Activated CD4-positive, alpha-beta memory T cell treated with anti-CD3 and anti-CD28 coated beads for 36 hours (primary cell): ENCODE measurements at regions of chr1 and their contacts with region 1.

Region 1: GRCh38 chr1:241847796-241848685 is at the start of gene EXO1:
- DNase-seq: peak; percentile 93
- H3K4me3 Mint-ChIP-seq: peak within 1 kb of the TSS; percentile 91
- H3K27ac Mint-ChIP-seq: peak within 1 kb of the TSS; percentile 99
- H3K4me1 Mint-ChIP-seq: peaks cover 22% of the 10 kb centered on the region
- H3K27me3 Mint-ChIP-seq: no peaks in the 10 kb centered on the region
- total RNA-seq, gene EXO1: 44.3 to 50.0 TPM

Region 2: GRCh38 chr1:241592273-241592958 is 255.6 kb before region 1 on chr1:
- CTCF ChIA-PET with region 1: no interaction called
- POLR2A ChIA-PET with region 1: no interaction called
- intact Hi-C with region 1: loop called (anchors 5 kb)
- DNase-seq: no peak
- H3K4me3 Mint-ChIP-seq: no peak overlapping the region
- H3K27ac Mint-ChIP-seq: peak overlapping the region; percentile 49
- H3K4me1 Mint-ChIP-seq: peaks cover 27% of the 10 kb centered on the region
- H3K27me3 Mint-ChIP-seq: no peaks in the 10 kb centered on the region

Region 3: GRCh38 chr1:241677201-241677600 is 170.8 kb before region 1 on chr1:
- CTCF ChIA-PET with region 1: no interaction called
- POLR2A ChIA-PET with region 1: no interaction called
- intact Hi-C with region 1: loop called (anchors 1 kb)
- DNase-seq: no peak
- H3K4me3 Mint-ChIP-seq: no peak overlapping the region
- H3K27ac Mint-ChIP-seq: no peak overlapping the region
- H3K4me1 Mint-ChIP-seq: peaks cover 15% of the 10 kb centered on the region
- H3K27me3 Mint-ChIP-seq: peaks cover 2% of the 10 kb centered on the region

Region 4: GRCh38 chr1:241716915-241717656 is 131.0 kb before region 1 on chr1:
- CTCF ChIA-PET with region 1: no interaction called
- POLR2A ChIA-PET with region 1: no interaction called
- intact Hi-C with region 1: no loop called
- DNase-seq: peak; percentile 18
- H3K4me3 Mint-ChIP-seq: no peak overlapping the region
- H3K27ac Mint-ChIP-seq: no peak overlapping the region
- H3K4me1 Mint-ChIP-seq: peaks cover 13% of the 10 kb centered on the region
- H3K27me3 Mint-ChIP-seq: peaks cover 19% of the 10 kb centered on the region

Region 5: GRCh38 chr1:242017584-242018233 is 169.7 kb after region 1 on chr1:
- CTCF ChIA-PET with region 1: no interaction called
- POLR2A ChIA-PET with region 1: no interaction called
- intact Hi-C with region 1: loop called (anchors 5 kb)
- DNase-seq: peak; percentile 50
- H3K4me3 Mint-ChIP-seq: no peak overlapping the region
- H3K27ac Mint-ChIP-seq: no peak overlapping the region
- H3K4me1 Mint-ChIP-seq: no peaks in the 10 kb centered on the region
- H3K27me3 Mint-ChIP-seq: no peaks in the 10 kb centered on the region